WTC11 (cell line): ENCODE measurements at regions of chr10 and their contacts with region 1.

Region 1: GRCh38 chr10:100046021-100046486 is 35.6 kb downstream of the CPN1 start:
- DNase-seq: peak; percentile 94
- ATAC-seq: peak; percentile 93
- H3K4me3 Mint-ChIP-seq: no peak overlapping the region
- H3K27ac Mint-ChIP-seq: peak overlapping the region; percentile 80
- H3K4me1 Mint-ChIP-seq: peaks cover 28% of the 10 kb centered on the region
- H3K27me3 Mint-ChIP-seq: no peaks in the 10 kb centered on the region
- CTCF ChIP-seq: peak; percentile 97

Region 2: GRCh38 chr10:99854860-99855259 is 191.2 kb before region 1 on chr10:
- CTCF ChIA-PET with region 1: interaction called, 26 read pairs
- POLR2A ChIA-PET with region 1: no interaction called
- DNase-seq: no peak
- ATAC-seq: peak; percentile 18
- H3K4me3 Mint-ChIP-seq: no peak overlapping the region
- H3K27ac Mint-ChIP-seq: peak overlapping the region; percentile 43; the same call in 1 of the 2 replicates
- H3K4me1 Mint-ChIP-seq: peaks cover 52% of the 10 kb centered on the region
- H3K27me3 Mint-ChIP-seq: peaks cover 2% of the 10 kb centered on the region; the same call in 1 of the 2 replicates
- CTCF ChIP-seq: no peak

Region 3: GRCh38 chr10:99917963-99918825 is 127.9 kb before region 1 on chr10:
- CTCF ChIA-PET with region 1: interaction called, 53 read pairs
- POLR2A ChIA-PET with region 1: interaction called, 9 read pairs
- DNase-seq: peak; percentile 73
- ATAC-seq: peak; percentile 49
- H3K4me3 Mint-ChIP-seq: peak overlapping the region; percentile 68
- H3K27ac Mint-ChIP-seq: peak overlapping the region; percentile 99
- H3K4me1 Mint-ChIP-seq: peaks cover 68% of the 10 kb centered on the region
- H3K27me3 Mint-ChIP-seq: no peaks in the 10 kb centered on the region
- CTCF ChIP-seq: no peak

Region 4: DNA sequence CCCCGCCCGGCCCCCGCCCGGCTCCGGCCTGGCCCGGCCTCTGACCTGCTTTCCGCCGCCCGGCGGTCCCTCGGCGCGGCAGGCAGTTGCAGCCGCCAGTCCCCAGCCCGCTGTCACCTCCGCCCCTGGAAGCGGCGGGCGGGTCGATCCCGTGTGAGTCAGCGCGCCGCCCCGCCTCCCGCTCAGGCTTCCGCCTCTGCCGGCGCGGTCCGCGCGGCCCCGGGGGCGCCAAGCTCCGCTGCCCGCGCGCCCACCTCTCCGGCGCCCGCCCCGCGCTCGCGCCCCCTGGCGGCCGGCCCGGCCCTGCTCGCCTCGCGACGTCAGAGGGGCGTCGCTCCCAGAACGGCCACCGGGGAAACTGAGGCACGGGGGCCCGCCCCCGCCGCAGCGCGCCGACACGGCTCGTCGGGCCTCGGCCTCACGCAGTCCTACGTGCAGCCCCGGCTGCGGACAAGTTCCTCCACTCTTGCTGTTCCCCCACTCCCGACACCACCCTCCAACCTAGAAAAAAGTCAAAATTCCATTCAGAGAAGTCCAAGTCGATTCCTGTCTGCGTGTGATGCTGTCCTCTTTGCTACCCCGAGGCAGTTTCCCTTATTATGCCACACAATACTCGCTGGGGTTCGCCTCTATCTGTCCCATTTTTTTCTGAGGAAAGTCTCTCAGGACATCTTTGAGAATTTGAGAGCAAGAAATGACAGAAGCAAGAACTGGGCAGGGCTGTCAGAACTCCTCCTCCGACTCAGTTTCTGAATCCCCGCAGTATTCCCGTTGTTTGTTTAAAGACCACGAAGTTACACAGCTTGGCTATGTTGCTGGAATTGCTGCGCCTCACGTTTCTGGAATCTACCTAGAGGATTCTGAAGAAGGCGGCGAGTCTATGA is 36.0 kb before region 1 on chr10 and contains the start of gene DNMBP:
- CTCF ChIA-PET with region 1: interaction called, 17 read pairs
- POLR2A ChIA-PET with region 1: no interaction called
- DNase-seq: peak; percentile 84
- ATAC-seq: peak; percentile 96
- H3K4me3 Mint-ChIP-seq: peak within 1 kb of the TSS; percentile 82
- H3K27ac Mint-ChIP-seq: no peak within 1 kb of the TSS
- H3K4me1 Mint-ChIP-seq: peaks cover 40% of the 10 kb centered on the region
- H3K27me3 Mint-ChIP-seq: peaks cover 21% of the 10 kb centered on the region
- CTCF ChIP-seq: peak; percentile 64
- total RNA-seq, gene DNMBP: 19.7 to 25.3 TPM (median 22.2 TPM) in 3 replicates

Region 5: GRCh38 chr10:100020142-100020885 is 25.7 kb before region 1 on chr10:
- CTCF ChIA-PET with region 1: interaction called, 16 read pairs
- POLR2A ChIA-PET with region 1: no interaction called
- DNase-seq: no peak
- ATAC-seq: peak; percentile 16; the same call in 1 of the 2 replicates
- H3K4me3 Mint-ChIP-seq: no peak overlapping the region
- H3K27ac Mint-ChIP-seq: peak overlapping the region; percentile 14; the same call in 1 of the 2 replicates
- H3K4me1 Mint-ChIP-seq: peaks cover 14% of the 10 kb centered on the region
- H3K27me3 Mint-ChIP-seq: no peaks in the 10 kb centered on the region
- CTCF ChIP-seq: no peak

Region 6: GRCh38 chr10:100065084-100065660 is 19.1 kb after region 1 on chr10:
- CTCF ChIA-PET with region 1: interaction called, 10 read pairs
- POLR2A ChIA-PET with region 1: no interaction called
- DNase-seq: peak; percentile 76
- ATAC-seq: peak; percentile 97
- H3K4me3 Mint-ChIP-seq: peak overlapping the region; percentile 60
- H3K27ac Mint-ChIP-seq: no peak overlapping the region
- H3K4me1 Mint-ChIP-seq: peaks cover 8% of the 10 kb centered on the region
- H3K27me3 Mint-ChIP-seq: no peaks in the 10 kb centered on the region
- CTCF ChIP-seq: no peak